ENCODE measurements at regions of chr9 and their contacts with region 1.

Region 1: GRCh38 chr9:33374634-33375213 is 27.6 kb downstream of the AQP7 start:
- DNase-seq: peak; percentile 32 to 86 (median 76)
- H3K4me3 ChIP-seq: peak overlapping the region in 34 of 59 donors; percentile 7 to 52 (median 29)
- H3K27ac ChIP-seq: peak overlapping the region in 35 of 59 donors; percentile 1 to 84 (median 64)
- H3K27me3 ChIP-seq: no peaks in the 10 kb centered on the region
- CTCF ChIP-seq: peak; percentile 78 to 94 (median 86)

Region 2: DNA sequence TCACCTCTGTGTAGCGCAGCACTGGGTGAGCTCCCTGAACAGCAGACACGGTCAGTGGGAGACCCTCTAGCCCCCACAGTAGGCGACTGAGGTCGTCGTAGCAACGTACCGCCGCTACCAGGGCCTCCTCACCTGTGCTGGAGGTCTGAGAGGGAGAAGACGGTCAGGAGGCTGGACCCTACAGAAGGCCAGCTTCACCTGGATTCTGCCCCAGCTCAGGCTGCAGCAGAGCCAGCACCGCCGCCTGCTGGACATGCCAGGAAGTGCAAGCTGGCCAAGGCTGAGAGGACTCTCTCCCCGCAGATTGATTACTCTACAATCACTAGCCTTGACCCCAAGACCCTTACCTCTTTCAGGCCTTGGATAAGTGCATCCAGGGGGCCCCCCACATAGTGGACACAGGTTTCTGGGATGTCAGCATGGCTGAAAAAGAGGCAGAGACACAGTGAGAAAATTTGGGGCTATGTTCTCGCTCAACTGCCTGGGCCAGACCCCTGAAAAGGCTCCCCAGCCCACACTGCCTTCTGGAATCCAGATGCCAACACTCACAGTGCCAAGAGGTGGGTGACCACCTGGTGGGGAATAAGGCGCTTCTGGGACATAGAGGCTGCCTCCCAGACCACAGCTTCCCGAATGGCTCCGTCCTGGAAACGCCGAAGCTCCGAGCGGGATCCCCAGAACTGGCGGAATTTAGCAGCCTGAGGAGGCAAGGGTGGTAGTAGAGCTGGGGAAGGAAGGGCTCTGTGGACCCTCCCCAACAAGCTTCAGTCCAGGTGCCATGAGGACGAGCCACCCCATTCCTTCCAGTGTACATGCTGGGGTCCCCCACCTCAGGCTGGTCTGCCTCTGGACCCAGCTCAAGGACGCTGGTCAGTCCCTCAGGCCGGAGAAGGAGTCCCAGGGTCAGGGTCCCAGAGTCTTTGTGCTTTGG is 92.1 kb after region 1 on chr9:
- intact Hi-C with region 1: loop called (anchors 5 to 10 kb)
- DNase-seq: peak; percentile 29 to 73 (median 56)
- H3K4me3 ChIP-seq: no peak overlapping the region
- H3K27ac ChIP-seq: peak overlapping the region in 5 of 59 donors; percentile 18 to 52 (median 35)
- H3K27me3 ChIP-seq: no peaks in the 10 kb centered on the region
- CTCF ChIP-seq: peak; percentile 54 to 95 (median 86)